ENCODE measurements at regions of chr11 and their contacts with region 1.

Region 1: DNA sequence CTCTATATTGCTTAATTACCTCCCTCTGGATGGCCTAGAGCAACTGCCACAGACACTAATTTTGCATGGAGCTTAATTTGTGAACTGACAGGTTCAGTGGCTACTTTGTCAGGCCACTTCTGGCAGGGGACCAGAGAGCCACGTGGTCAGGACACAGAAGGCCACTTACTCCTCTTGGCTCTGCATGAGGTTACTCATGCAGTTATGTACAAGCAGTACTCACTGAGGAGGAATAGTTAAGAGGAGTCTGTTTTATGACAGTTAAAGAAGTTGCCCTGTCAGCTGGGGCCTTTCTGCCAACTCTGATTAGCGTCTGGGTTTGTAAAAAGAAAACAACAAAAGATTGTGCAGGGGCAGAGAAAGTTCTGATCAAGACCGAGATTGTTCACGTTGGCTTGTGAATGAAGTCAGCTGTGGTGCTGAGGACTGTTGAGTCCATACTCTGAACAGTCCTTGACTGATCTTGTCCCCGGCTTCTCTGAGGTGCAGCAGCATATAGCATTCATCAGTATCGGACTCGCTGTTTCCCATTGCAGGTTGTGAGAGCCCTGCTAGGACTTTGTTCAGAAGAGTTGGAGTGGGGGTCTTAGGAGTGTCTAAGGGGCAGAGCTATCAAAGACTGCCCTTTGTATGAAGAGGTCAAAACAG is 41.4 kb downstream of the PPFIBP2 start:
- DNase-seq: peak; percentile 80 to 94
- ATAC-seq: peak; percentile 95 to 98 (median 97)
- H3K4me3 ChIP-seq: no peak overlapping the region
- H3K27ac ChIP-seq: peak overlapping the region; percentile 72
- H3K4me1 ChIP-seq: peaks cover 28% of the 10 kb centered on the region
- H3K27me3 ChIP-seq: no peaks in the 10 kb centered on the region
- CTCF ChIP-seq: no peak

Region 2: DNA sequence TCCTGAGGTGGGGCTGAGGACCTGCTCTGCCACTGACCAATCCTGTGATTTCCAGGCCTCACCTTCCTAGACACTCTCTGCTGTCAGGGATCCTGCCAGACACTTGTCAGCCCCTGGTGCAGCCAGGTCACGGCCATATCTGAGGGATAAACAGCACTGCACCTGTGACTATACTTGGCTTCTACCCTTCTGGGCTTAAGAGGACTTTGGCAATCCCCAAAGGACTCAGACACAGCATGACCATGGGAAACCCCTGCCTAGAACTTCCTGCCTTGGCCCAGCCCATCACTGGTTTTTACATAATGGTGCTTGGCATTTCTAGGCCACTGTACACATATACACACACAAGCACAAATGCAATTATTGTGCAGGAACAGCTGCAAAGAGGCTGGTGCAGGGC is 81.5 kb before region 1 on chr11:
- intact Hi-C with region 1: no loop called
- DNase-seq: no peak
- ATAC-seq: peak; percentile 57 to 96 (median 87)
- H3K4me3 ChIP-seq: no peak overlapping the region
- H3K27ac ChIP-seq: peak overlapping the region; percentile 43
- H3K4me1 ChIP-seq: peaks cover 12% of the 10 kb centered on the region
- H3K27me3 ChIP-seq: no peaks in the 10 kb centered on the region
- CTCF ChIP-seq: no peak

Region 3: DNA sequence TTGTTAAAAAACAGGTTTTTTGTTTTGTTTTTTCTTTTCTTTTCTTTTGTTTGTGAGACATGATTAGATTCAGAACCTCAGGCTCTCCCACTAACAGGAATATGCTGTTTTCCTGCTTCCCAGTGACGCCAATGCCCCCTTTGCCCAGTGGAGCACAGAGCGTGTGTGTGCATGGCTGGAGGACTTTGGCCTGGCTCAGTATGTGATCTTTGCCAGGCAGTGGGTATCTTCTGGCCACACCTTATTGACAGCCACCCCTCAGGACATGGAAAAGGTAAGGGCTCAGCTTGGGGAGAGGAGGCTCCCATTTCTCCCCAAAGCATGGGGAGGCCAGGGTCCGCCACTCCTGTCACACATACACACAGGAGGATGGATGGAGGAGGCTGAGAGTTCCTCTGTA is 93.1 kb after region 1 on chr11:
- intact Hi-C with region 1: loop called in 1 of 2 experiments (anchors 5 kb)
- DNase-seq: no peak
- ATAC-seq: no peak
- H3K4me3 ChIP-seq: no peak overlapping the region
- H3K27ac ChIP-seq: no peak overlapping the region
- H3K4me1 ChIP-seq: no peaks in the 10 kb centered on the region
- H3K27me3 ChIP-seq: no peaks in the 10 kb centered on the region
- CTCF ChIP-seq: no peak